MCF 10A (cell line): ENCODE measurements at regions of chr7 and their contacts with region 1.

Region 1: DNA sequence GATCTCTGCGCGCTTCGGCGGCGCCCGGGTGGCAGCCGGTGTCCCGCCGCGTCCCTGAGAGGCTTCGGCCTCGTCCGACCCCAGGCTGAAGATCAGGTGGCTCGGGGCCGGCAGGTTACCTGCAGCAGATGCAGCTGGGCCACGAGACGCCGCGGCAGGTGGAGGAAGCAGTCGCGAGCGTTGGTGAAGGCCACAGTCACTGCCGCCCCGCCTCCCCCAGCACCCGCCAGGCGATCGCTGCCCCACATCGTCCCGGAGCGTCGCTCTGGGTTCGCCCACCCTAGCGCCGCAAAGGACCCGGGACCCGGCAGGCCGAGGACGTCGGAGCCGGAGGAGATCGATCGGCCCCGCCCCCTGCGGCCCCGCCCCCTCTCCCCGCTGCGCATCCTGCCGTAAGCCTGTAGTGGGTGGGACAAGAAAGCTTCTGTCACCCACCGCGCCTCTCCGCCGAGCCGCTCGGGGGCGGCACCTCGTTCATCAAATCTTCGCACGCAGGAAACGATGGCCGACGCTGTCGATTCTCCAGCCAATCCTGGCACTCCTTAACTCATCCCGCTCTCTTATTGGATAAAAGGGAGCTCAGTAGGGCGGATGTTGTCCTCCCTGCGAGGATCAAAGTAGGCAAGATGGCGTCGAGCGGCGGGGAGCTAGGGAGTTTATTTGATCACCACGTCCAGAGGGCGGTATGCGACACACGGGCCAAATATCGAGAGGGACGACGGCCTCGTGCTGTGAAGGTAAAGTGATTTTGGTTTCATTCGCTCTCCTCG is at the starts of genes PEX1 and RBM48:
- DNase-seq: peak; percentile 99
- H3K4me3 Mint-ChIP-seq: peak within 1 kb of the TSS; percentile 98
- H3K27ac Mint-ChIP-seq: peak within 1 kb of the TSS; percentile 99
- H3K4me1 Mint-ChIP-seq: peaks cover 16% of the 10 kb centered on the region
- H3K27me3 Mint-ChIP-seq: no peaks in the 10 kb centered on the region
- CTCF ChIP-seq: no peak
- total RNA-seq, gene PEX1: 12.4 and 12.6 TPM in 2 replicates
- total RNA-seq, gene RBM48: 10.4 and 10.7 TPM in 2 replicates

Region 2: DNA sequence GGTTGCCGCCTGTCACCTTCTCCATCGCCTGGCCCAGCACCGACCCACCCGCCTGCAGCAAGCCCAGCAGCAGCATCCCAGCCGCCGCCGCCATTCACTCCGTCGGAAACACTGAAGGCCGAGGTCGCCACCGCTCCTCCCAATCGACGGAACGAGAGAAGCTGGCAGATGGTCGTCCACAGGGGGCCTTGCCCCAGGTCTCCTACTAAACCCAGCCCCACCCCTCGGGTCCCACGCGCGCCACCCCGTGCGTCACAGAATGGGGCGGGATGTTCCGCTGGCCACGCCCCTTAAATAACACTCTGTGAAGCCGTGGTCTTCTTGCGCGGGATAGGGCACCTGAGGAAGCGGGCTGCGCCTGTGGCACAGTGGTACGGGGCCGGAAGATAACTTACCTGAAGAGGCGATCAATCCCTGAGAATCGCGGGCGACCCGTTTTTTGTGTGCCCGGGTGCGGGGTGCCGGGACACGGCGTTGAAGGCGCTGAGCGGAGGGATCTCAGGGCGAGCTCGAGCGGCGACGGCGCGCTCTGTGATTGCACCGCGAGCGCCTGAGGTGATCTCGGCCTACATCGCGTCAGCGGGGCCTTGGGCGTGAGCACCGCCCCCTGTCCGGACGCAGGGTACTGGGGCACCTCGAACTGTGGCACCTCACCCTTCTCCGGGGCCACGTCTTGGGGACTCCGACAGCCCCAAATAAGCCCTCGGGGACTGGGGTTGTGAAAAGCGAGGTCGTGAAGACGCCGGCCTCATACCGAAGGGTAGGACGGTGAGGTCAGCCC is 393.9 kb before region 1 on chr7 and contains the start of gene CYP51A1:
- CTCF ChIA-PET with region 1: no interaction called
- POLR2A ChIA-PET with region 1: interaction called, 10 read pairs
- intact Hi-C with region 1: no loop called
- DNase-seq: peak; percentile 94
- H3K4me3 Mint-ChIP-seq: peak within 1 kb of the TSS; percentile 90
- H3K27ac Mint-ChIP-seq: peak within 1 kb of the TSS; percentile 98
- H3K4me1 Mint-ChIP-seq: peaks cover 27% of the 10 kb centered on the region
- H3K27me3 Mint-ChIP-seq: no peaks in the 10 kb centered on the region
- CTCF ChIP-seq: no peak
- total RNA-seq, gene CYP51A1: 124 and 148 TPM in 2 replicates

Region 3: GRCh38 chr7:92513167-92513902 is 15.0 kb before region 1 on chr7:
- CTCF ChIA-PET with region 1: no interaction called
- POLR2A ChIA-PET with region 1: interaction called, 13 read pairs
- intact Hi-C with region 1: no loop called
- DNase-seq: no peak
- H3K4me3 Mint-ChIP-seq: no peak overlapping the region
- H3K27ac Mint-ChIP-seq: no peak overlapping the region
- H3K4me1 Mint-ChIP-seq: no peaks in the 10 kb centered on the region
- H3K27me3 Mint-ChIP-seq: no peaks in the 10 kb centered on the region
- CTCF ChIP-seq: no peak

Region 4: GRCh38 chr7:92557249-92557648 is 28.9 kb after region 1 on chr7:
- CTCF ChIA-PET with region 1: interaction called, 5 read pairs
- POLR2A ChIA-PET with region 1: interaction called, 10 read pairs
- intact Hi-C with region 1: no loop called
- DNase-seq: no peak
- H3K4me3 Mint-ChIP-seq: no peak overlapping the region
- H3K27ac Mint-ChIP-seq: no peak overlapping the region
- H3K4me1 Mint-ChIP-seq: no peaks in the 10 kb centered on the region
- H3K27me3 Mint-ChIP-seq: no peaks in the 10 kb centered on the region
- CTCF ChIP-seq: no peak

Region 5: DNA sequence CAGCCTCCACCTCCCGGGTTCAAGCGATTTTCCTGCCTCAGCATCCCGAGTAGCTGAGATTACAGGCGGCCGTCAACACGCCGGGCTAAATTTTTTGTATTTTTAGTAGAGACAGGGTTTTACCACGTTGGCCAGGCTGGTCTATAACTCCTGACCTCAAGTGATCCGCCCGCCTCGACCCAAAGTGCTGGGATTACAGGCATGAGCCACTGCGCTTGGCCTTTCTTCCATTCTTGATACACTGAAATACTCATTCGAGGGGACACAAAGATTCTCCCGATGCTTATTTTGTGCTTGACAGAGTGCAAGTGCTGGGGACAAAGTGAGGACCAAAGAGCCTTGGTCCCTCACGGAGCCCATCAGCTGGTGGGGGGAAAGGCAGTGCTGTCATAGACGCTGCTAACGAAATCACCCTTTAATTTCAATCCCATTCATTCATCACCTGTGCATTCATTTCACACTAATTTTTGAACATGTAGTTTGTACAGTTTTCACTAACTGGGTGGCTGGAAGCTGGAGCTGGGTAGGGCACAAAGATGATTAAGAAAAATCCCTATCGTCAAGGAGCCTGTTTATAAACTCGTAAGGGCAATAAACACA is 62.4 kb after region 1 on chr7:
- CTCF ChIA-PET with region 1: no interaction called
- POLR2A ChIA-PET with region 1: interaction called, 11 read pairs
- intact Hi-C with region 1: loop called (anchors 5 kb)
- DNase-seq: no peak
- H3K4me3 Mint-ChIP-seq: peak overlapping the region; percentile 99
- H3K27ac Mint-ChIP-seq: peak overlapping the region; percentile 98
- H3K4me1 Mint-ChIP-seq: peaks cover 20% of the 10 kb centered on the region
- H3K27me3 Mint-ChIP-seq: no peaks in the 10 kb centered on the region
- CTCF ChIP-seq: no peak